Psoas muscle (tissue), 8 donors: ENCODE measurements at regions of chr22 and their contacts with region 1.

Region 1: GRCh38 chr22:43993027-43993760 is 30.9 kb upstream of the PARVB start:
- DNase-seq: peak; percentile 46 to 76
- ATAC-seq: peak; percentile 70 to 85 (median 81)
- H3K4me3 ChIP-seq: no peak overlapping the region
- H3K27ac ChIP-seq: peak overlapping the region; percentile 32
- H3K4me1 ChIP-seq: peaks cover 22% of the 10 kb centered on the region
- H3K27me3 ChIP-seq: no peaks in the 10 kb centered on the region
- CTCF ChIP-seq: peak; percentile 98

Region 2: GRCh38 chr22:44049486-44050231 is 56.5 kb after region 1 on chr22:
- intact Hi-C with region 1: no loop called
- DNase-seq: no peak
- ATAC-seq: peak; percentile 71 to 84 (median 79)
- H3K4me3 ChIP-seq: no peak overlapping the region
- H3K27ac ChIP-seq: peak overlapping the region; percentile 81
- H3K4me1 ChIP-seq: peaks cover 45% of the 10 kb centered on the region
- H3K27me3 ChIP-seq: no peaks in the 10 kb centered on the region
- CTCF ChIP-seq: no peak

Region 3: GRCh38 chr22:44088976-44089570 is 95.9 kb after region 1 on chr22:
- intact Hi-C with region 1: loop called (anchors 1 to 2 kb)
- DNase-seq: peak; percentile 57 to 90
- ATAC-seq: peak; percentile 59 to 71 (median 67)
- H3K4me3 ChIP-seq: no peak overlapping the region
- H3K27ac ChIP-seq: peak overlapping the region; percentile 94
- H3K4me1 ChIP-seq: peaks cover 46% of the 10 kb centered on the region
- H3K27me3 ChIP-seq: no peaks in the 10 kb centered on the region
- CTCF ChIP-seq: no peak

Region 4: DNA sequence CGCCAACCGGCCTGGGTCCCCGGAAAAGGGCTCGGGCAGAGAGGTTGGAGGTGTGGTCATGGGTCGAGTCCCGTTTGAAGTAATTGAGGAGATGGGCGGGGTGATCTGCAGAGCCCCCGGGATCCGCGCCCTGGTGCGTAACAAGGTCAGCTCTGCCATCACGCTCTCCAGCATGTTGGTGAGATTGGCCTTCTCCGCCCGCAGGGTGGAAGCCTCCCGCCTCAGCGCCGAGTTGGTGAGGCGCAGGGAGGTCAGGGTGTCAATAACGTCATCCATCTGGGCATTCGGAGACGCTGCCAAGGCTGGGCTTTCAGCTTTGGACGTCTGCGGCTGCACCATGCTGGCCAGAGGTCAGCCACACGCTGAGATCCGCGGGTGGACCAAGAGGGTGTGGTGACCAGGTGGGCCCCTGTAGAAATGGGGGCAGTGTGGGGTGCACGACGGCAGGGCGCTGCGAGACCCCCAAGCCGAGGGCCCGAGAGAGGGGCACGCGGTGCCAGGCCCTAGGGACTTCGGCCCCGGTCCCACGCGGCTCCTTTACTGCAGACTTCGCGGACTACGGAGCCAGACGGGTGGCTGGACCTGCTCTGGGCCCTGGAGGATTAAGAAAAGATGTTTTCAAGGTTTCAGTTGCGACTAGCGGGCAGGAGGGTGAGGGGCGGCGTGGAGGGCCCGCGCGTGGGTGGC is 504.2 kb after region 1 on chr22:
- intact Hi-C with region 1: loop called in 1 of 2 experiments (anchors 10 kb)
- DNase-seq: peak; percentile 43 to 60
- ATAC-seq: peak; percentile 16 to 56 (median 36)
- H3K4me3 ChIP-seq: peak overlapping the region; percentile 89
- H3K27ac ChIP-seq: peak overlapping the region; percentile 79
- H3K4me1 ChIP-seq: peaks cover 15% of the 10 kb centered on the region
- H3K27me3 ChIP-seq: no peaks in the 10 kb centered on the region
- CTCF ChIP-seq: no peak

Region 5: DNA sequence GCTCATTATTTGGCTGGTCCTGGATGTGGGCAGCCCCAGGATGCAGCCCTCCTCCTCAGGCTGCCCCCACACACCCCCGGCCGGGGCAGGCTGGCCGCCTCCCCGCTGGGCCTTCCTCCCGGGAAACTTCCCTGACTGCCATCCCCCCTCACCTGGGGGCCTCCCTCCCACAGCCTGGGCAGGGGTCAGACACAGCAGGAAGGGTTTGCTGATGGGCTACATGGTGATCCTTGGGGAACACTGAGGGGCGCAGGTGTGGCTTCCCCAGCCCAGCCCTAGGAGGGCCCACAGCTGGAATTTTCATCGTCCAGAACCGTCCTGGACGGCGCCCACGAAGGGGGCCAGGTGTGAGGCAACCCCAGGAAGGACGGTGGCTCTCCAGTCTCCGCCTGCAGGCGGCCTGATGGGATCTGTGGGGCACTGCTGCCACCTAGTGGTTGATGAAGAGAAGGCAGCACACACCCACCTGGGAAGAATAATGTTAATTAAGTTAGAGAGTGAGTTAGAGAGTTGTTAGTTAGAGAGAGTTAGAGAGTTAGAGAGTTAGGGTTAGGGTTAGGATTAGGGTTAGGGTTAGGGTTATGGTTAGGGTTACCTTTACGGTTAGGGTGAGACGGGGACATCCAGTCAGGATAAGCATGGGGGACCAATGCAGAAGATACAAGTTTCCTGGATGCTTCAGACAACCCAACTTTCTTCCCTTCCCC is 632.9 kb after region 1 on chr22:
- intact Hi-C with region 1: loop called (anchors 2 to 10 kb)
- DNase-seq: peak; percentile 68 to 80
- ATAC-seq: peak; percentile 81 to 94 (median 87)
- H3K4me3 ChIP-seq: no peak overlapping the region
- H3K27ac ChIP-seq: no peak overlapping the region
- H3K4me1 ChIP-seq: no peaks in the 10 kb centered on the region
- H3K27me3 ChIP-seq: peaks cover 0 to 30% (median 7%) of the 10 kb centered on the region in 3 donors
- CTCF ChIP-seq: peak; percentile 97